Posterior cingulate gyrus (tissue), 11 donors: ENCODE measurements at regions of chr5 and their contacts with region 1.

Region 1: DNA sequence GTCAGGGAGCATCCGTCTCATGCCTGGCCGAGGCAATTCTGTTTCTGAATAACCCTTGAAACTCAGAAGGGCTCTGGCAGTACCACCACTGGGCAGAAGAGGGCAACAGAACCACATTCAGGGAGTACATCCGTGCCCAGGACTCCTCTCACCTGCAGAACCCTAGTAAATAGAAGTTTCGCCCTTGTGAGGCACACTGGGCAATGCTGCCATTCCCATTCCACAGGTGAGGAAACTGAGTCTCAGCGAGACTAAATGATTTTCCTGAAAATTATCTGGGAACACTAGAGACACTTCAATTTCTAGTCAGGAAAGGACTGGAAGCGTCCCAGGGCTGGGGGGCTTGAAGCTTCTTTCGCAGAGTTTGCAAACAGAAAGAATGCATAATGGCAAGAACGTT is 74.7 kb downstream of the FGF1 start:
- DNase-seq: peak; percentile 51 to 95 (median 77)

Region 2: DNA sequence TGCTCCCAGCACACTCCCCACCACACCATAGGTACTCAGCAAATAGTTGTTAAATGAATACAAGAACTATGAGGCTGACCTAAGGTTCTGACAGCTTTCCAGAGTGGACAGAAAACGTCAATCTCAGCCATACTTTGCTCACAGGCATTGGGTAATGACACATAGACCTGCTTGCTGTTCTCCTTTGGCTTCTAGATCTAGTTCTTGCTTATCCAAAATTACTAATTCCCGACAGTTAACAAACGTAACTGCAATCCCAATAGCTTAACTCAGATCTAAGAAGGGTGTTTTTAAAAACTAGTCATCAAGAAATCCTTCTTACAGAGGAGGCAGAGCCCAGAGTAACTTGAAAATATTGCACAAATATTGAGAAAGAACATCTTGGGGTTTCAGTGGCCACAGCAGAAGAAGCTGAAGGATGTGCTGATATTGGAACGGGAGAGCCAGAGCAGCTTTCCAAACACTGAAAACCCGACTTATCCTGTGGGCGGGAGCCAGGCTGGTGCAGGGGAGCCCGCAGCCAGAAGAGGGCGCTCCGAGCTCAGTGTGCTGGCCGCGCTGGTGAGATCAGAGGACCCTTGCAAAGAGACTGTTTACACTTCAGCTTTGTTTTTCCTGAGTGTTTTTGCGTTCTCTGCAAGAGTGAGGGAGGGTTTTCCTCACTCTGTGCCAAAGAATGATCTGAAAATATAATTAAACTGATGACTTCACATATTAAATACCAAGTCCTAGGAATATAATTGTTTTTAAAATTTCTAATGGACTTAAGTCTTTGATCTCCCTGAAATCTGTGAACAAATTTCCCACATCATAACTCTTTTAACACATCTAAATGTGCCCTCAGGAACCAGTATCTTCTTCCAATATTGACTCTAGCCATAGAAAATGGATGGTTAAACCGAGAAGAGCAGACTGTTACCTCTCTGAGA is 44.4 kb after region 1 on chr5:
- intact Hi-C with region 1: loop called (anchors 2 kb)
- DNase-seq: peak; percentile 78 to 98 (median 92)

Region 3: GRCh38 chr5:142699184-142699720 is 88.1 kb after region 1 on chr5:
- intact Hi-C with region 1: loop called (anchors 1 kb)
- DNase-seq: peak; percentile 77 to 97 (median 92)

Region 4: GRCh38 chr5:143244000-143244736 is 633.0 kb after region 1 on chr5:
- intact Hi-C with region 1: no loop called
- DNase-seq: peak in 5 of 10 donors; percentile 20 to 89 (median 64)